ENCODE measurements at regions of chr9 and their contacts with region 1.

Region 1: GRCh38 chr9:34675048-34675714 is 12.7 kb upstream of the CCL27 start:
- DNase-seq: peak in 7 of 9 donors; percentile 24 to 53 (median 38)
- ATAC-seq: peak; percentile 90
- H3K4me3 ChIP-seq: no peak overlapping the region
- H3K4me3 Mint-ChIP-seq: no peak overlapping the region
- H3K27ac ChIP-seq: no peak overlapping the region
- H3K27ac Mint-ChIP-seq: peak overlapping the region in 2 of 9 donors; percentile 44 to 51
- H3K4me1 ChIP-seq: no peaks in the 10 kb centered on the region
- H3K4me1 Mint-ChIP-seq: peaks cover 0 to 7% (median 4%) of the 10 kb centered on the region in 7 donors
- H3K27me3 ChIP-seq: no peaks in the 10 kb centered on the region
- H3K27me3 Mint-ChIP-seq: no peaks in the 10 kb centered on the region

Region 2: DNA sequence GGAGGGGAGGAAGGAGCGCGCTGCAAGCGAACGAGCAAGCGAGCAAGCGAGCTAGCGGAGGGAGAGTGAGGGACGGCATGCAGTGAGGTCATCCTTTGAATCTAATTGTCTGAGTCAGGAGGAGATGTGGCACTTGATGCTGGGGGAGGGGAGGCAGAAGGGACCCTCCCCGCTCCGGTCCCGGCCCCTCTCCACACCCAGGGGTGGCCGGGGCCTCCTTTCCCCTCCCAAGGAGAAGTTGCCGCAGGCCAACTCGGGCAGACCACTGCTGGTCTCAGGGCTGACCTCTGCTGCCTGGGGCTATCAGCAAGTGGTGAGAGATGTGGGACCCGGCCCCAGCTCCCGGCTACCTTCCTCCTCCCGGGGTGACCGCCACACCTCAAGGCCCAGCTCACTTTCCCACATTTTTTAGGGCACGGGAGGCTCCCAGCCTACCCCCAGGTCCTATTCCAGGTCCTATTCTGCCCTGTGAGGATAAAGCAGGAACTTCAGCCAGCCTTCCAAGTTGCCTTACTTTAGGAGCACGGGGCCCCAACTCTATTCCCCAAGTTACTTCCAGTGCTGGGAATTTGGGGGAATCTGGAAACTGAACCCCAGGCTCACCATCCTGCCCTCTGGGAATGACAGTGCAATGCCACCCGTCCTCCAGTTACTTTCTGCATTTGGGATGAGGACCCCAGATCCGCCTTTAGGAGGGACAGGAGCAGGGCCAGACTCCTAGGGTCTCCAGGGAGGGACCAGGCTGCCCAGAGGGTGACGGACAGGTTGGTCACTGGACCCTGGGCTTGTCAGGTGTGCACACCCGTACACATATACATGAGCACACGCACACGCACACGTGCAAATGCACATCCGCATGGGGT is 96.7 kb before region 1 on chr9:
- CTCF ChIA-PET with region 1: no interaction called
- POLR2A ChIA-PET with region 1: no interaction called
- intact Hi-C with region 1: no loop called
- DNase-seq: no peak
- ATAC-seq: peak; percentile 19
- H3K4me3 ChIP-seq: no peak overlapping the region
- H3K4me3 Mint-ChIP-seq: peak overlapping the region in 5 of 10 donors; percentile 36 to 80 (median 46)
- H3K27ac ChIP-seq: no peak overlapping the region
- H3K27ac Mint-ChIP-seq: no peak overlapping the region
- H3K4me1 ChIP-seq: peaks cover 0 to 5% of the 10 kb centered on the region in 2 donors
- H3K4me1 Mint-ChIP-seq: peaks cover 0 to 18% (median 12%) of the 10 kb centered on the region in 7 donors
- H3K27me3 ChIP-seq: peaks cover 0 to 15% of the 10 kb centered on the region in 2 donors
- H3K27me3 Mint-ChIP-seq: peaks cover 59 to 74% (median 70%) of the 10 kb centered on the region in 5 donors

Region 3: DNA sequence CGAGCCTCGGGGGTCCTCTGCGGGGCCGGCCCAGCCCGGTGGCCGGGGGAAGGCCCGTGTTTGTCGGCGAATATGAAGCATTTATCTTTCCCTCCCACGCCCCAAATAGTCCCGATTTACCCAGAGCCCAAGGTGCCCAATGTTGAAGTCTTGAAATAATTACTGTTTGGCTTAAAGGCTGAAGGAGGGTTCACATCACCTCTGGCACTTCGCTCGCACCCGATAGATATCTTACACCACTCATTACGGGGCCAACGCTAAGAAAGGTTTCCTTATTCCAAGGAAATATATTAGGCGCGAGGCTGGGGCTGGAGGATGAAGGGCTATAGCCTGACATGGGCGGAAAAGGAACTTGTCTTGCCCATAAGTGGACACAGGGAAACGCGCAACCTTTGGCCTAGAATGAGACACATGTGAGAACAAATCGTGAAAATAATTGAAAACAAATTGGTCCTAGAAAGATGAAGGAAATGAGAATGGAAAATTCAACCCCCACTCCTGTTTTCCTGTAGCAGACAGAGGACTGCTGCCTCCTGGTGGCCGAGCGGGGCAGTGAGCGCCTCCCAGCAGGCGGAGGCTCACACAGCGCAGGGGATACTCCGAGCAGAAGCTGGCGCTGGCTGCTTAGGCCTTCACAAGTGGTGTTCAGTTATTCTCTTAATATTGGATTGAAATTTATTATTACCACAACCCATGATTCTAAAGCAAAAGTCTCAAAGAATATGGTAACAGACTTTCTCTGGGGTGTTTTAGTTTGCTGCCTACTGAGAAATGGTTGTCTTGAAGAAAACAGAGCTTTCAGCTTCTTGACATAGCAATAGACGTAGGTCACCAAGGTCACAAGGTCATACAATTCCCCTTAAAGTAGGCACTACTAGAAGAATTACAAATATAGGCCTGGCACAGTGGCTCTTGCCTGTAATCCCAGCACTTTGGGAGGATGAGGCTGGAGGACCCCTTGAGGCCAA is 26.9 kb after region 1 on chr9:
- CTCF ChIA-PET with region 1: interaction called, 5 read pairs
- POLR2A ChIA-PET with region 1: no interaction called
- intact Hi-C with region 1: loop called (anchors 1 kb)
- DNase-seq: peak; percentile 59 to 83 (median 73)
- ATAC-seq: peak; percentile 90
- H3K4me3 ChIP-seq: peak overlapping the region; percentile 61
- H3K4me3 Mint-ChIP-seq: peak overlapping the region; percentile 80 to 91 (median 84)
- H3K27ac ChIP-seq: no peak overlapping the region
- H3K27ac Mint-ChIP-seq: peak overlapping the region in 7 of 9 donors; percentile 1 to 84 (median 20)
- H3K4me1 ChIP-seq: no peaks in the 10 kb centered on the region
- H3K4me1 Mint-ChIP-seq: peaks cover 5 to 9% (median 6%) of the 10 kb centered on the region in 7 donors
- H3K27me3 ChIP-seq: no peaks in the 10 kb centered on the region
- H3K27me3 Mint-ChIP-seq: peaks cover 0 to 17% (median 0%) of the 10 kb centered on the region in 5 donors

Region 4: DNA sequence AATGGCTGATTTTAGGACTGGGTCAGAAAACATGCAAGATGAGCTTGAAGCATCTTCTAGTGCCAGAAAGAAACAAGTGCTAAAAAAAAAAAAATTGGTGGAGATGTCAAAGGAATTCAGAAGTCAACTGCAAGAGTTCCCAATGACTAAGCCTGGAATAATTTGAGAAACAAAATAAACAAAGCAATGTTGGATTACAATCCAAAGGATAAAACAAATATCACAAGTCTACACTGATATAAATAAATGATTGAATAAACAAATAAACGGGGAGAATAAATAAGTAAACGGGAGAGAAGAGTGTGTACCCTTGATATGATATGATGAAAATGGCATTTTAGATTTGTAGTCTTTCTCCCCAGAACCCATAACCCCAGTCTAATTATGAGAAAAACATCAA is 98.2 kb after region 1 on chr9:
- CTCF ChIA-PET with region 1: no interaction called
- POLR2A ChIA-PET with region 1: no interaction called
- intact Hi-C with region 1: no loop called
- DNase-seq: no peak
- ATAC-seq: no peak
- H3K4me3 ChIP-seq: no peak overlapping the region
- H3K4me3 Mint-ChIP-seq: no peak overlapping the region
- H3K27ac ChIP-seq: no peak overlapping the region
- H3K27ac Mint-ChIP-seq: no peak overlapping the region
- H3K4me1 ChIP-seq: no peaks in the 10 kb centered on the region
- H3K4me1 Mint-ChIP-seq: peaks cover 0 to 4% (median 0%) of the 10 kb centered on the region in 7 donors
- H3K27me3 ChIP-seq: no peaks in the 10 kb centered on the region
- H3K27me3 Mint-ChIP-seq: peaks cover 7 to 61% (median 53%) of the 10 kb centered on the region in 5 donors

Region 5: GRCh38 chr9:35277628-35278359 is 602.6 kb after region 1 on chr9:
- CTCF ChIA-PET with region 1: no interaction called
- POLR2A ChIA-PET with region 1: no interaction called
- intact Hi-C with region 1: no loop called
- DNase-seq: no peak
- ATAC-seq: no peak
- H3K4me3 ChIP-seq: no peak overlapping the region
- H3K4me3 Mint-ChIP-seq: no peak overlapping the region
- H3K27ac ChIP-seq: no peak overlapping the region
- H3K27ac Mint-ChIP-seq: no peak overlapping the region
- H3K4me1 ChIP-seq: no peaks in the 10 kb centered on the region
- H3K4me1 Mint-ChIP-seq: peaks cover 4 to 12% (median 10%) of the 10 kb centered on the region in 7 donors
- H3K27me3 ChIP-seq: no peaks in the 10 kb centered on the region
- H3K27me3 Mint-ChIP-seq: peaks cover 0 to 12% (median 4%) of the 10 kb centered on the region in 5 donors

Measured in naive thymus-derived CD4-positive, alpha-beta T cell (primary cell).